Esophagus muscularis mucosa (tissue), 4 donors: ENCODE measurements at regions of chr9 and their contacts with region 1.

Region 1: DNA sequence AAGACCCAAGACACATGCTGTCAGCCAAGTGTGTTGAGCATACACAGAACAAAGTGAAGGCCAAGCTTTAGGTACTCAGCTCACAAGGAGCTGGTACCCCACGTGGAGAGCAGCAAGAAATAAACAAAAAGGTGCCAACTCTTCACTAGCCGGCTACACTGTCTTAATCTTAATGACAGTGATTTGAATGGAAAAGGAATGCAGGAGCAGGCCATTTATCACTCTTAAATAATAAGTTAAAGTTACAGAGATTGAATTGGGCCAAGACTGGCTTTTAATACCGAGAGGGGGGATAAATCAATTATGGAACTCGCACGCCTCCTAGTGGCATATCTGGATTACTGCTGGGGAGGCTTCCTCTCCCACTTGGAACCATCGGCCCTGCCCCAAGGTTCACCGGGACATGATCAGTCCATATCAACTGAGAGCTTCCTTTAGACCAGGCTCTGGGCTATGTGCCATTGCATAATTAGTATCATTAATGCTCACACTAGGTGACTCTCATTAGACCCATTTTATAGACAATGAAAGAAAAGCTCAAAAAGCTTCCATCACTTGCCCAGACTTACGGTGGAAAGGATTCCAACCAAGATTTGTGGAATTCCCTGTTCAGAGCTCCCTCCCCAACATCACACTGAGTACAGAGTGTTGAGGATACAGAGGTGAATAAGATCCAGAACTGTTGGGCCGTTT is 94.0 kb downstream of the ACTL7B start:
- DNase-seq: no peak
- H3K4me3 ChIP-seq: no peak overlapping the region
- H3K27ac ChIP-seq: no peak overlapping the region
- H3K4me1 ChIP-seq: peaks cover 3 to 11% (median 9%) of the 10 kb centered on the region in 4 donors
- H3K27me3 ChIP-seq: no peaks in the 10 kb centered on the region
- CTCF ChIP-seq: peak; percentile 70 to 88 (median 73)
- EP300 ChIP-seq: no peak
- POLR2A ChIP-seq: no peak

Region 2: DNA sequence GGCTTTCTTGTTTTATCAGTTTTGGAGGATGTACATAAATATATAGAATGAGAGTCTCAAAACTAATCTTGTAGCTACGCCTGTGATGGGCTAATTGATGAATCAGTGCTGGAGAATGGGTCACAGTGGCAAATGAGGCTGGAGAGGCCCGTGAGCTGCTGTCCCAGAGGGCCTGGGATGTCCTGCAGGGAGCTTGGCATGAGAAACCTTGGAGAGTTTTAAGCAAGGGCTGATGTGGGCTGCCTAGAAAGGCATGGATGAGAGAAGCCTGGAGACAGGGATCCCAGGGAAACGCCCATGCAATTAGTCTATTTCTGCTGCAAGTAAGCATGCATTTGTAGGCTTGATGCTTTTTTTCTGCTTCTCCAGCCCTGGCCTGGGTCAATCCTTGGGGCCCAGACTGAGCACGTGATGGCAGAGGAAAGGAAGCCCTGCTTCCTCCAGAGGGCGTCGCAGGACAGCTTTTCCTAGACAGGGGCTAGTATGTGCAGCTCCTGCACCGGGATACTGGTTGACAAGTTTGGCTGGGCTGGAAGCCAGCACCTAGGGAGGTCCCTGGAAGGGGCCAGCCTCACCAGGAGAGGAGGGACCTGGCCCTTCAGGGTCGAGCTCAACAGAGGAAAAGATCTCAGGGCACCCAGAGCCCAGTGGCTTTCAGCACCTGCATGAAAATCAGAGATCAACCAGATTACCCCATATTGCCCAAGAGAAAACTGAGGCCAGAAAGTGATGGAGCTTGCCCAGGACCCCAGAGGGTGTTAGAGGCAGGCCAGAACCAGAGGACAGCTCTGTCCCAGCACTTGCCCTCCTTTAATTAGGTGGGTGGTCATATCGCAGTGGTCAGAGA is 1339.6 kb before region 1 on chr9:
- intact Hi-C with region 1: loop called (anchors 5 kb)
- DNase-seq: no peak
- H3K4me3 ChIP-seq: no peak overlapping the region
- H3K27ac ChIP-seq: no peak overlapping the region
- H3K4me1 ChIP-seq: peaks cover 12 to 25% (median 22%) of the 10 kb centered on the region in 4 donors
- H3K27me3 ChIP-seq: no peaks in the 10 kb centered on the region
- CTCF ChIP-seq: peak; percentile 51 to 62 (median 58)
- EP300 ChIP-seq: no peak
- POLR2A ChIP-seq: no peak

Region 3: GRCh38 chr9:107465467-107466451 is 1296.0 kb before region 1 on chr9:
- intact Hi-C with region 1: loop called (anchors 5 kb)
- DNase-seq: no peak
- H3K4me3 ChIP-seq: peak overlapping the region; percentile 63 to 72 (median 67)
- H3K27ac ChIP-seq: peak overlapping the region; percentile 41 to 69 (median 46)
- H3K4me1 ChIP-seq: peaks cover 8 to 16% (median 16%) of the 10 kb centered on the region in 4 donors
- H3K27me3 ChIP-seq: peaks cover 0 to 23% (median 0%) of the 10 kb centered on the region in 4 donors
- CTCF ChIP-seq: peak; percentile 83 to 94 (median 92)
- EP300 ChIP-seq: no peak
- POLR2A ChIP-seq: no peak

Region 4: DNA sequence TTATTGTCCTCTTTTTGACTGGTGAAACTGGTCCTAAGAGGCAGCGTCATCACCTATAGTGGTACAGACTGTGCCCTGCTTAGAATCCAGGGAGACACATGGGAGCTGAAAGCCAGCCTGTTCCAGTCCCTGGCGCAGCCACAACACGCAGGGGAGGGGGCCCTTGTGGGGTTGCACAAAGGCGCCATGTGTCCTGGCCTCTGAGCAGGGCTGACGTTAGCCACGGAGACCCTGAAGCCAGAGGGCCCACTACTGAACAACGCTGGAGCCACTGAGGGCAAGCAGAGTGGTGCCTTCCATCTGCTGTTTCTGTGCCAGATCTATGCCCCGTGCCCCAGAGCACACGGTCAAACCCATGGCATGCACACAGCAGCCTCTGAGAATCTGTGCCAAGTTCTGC is 53.4 kb before region 1 on chr9:
- intact Hi-C with region 1: no loop called
- DNase-seq: no peak
- H3K4me3 ChIP-seq: no peak overlapping the region
- H3K27ac ChIP-seq: peak overlapping the region in 1 of 4 donors; percentile 73
- H3K4me1 ChIP-seq: peaks cover 0 to 13% (median 0%) of the 10 kb centered on the region in 4 donors
- H3K27me3 ChIP-seq: no peaks in the 10 kb centered on the region
- CTCF ChIP-seq: no peak
- EP300 ChIP-seq: no peak
- POLR2A ChIP-seq: no peak